K562 (cell line): ENCODE measurements at regions of chrX and their contacts with region 1.

Region 1: GRCh38 chrX:151680805-151681204 is 14.5 kb upstream of the PRRG3 start:
- DNase-seq: peak; percentile 62 to 78 (median 72)
- ATAC-seq: peak; percentile 99
- H3K4me3 ChIP-seq: no peak overlapping the region
- H3K27ac ChIP-seq: no peak overlapping the region
- H3K4me1 ChIP-seq: peaks cover 0 to 5% of the 10 kb centered on the region in 2 experiments; a peak in 3 of 5 replicates
- H3K27me3 ChIP-seq: peaks cover 0 to 12% of the 10 kb centered on the region in 2 experiments; a peak in 2 of 5 replicates
- CTCF ChIP-seq: peak; percentile 65 to 82 (median 81)
- EP300 ChIP-seq: no peak
- POLR2A ChIP-seq: no peak
- RAD21 ChIP-seq: peak; percentile 87 to 90

Region 2: GRCh38 chrX:151346931-151347543 is 333.8 kb before region 1 on chrX:
- CTCF ChIA-PET with region 1: no interaction called
- POLR2A ChIA-PET with region 1: no interaction called
- in situ Hi-C with region 1: loop called (anchors 10 kb)
- intact Hi-C with region 1: no loop called
- DNase-seq: no peak
- ATAC-seq: no peak
- H3K4me3 ChIP-seq: no peak overlapping the region
- H3K27ac ChIP-seq: no peak overlapping the region
- H3K4me1 ChIP-seq: no peaks in the 10 kb centered on the region
- H3K27me3 ChIP-seq: peaks cover 0 to 13% of the 10 kb centered on the region in 2 experiments; a peak in 2 of 5 replicates
- CTCF ChIP-seq: no peak
- EP300 ChIP-seq: no peak
- POLR2A ChIP-seq: no peak
- RAD21 ChIP-seq: no peak

Region 3: DNA sequence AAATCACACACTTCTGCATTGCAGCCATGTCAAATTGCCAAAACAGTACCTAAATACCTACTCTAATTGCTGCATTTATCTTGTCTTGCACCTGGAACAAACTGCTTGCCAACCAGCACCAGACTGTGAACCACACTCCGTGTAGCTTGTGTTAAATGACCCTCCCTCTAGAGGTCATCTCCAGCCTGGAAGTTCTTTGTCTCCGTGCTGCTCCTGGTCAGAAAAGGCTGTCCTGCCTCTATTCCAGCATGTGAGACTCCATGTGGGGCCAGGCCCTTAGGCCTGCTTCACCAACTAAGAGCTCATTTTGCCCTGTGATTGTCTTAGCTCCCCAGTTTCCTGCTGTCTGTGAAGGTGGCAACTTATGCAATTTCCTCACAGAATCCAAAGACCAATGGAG is 82.0 kb after region 1 on chrX:
- CTCF ChIA-PET with region 1: no interaction called
- POLR2A ChIA-PET with region 1: no interaction called
- in situ Hi-C with region 1: no loop called
- intact Hi-C with region 1: no loop called
- DNase-seq: peak in 1 of 4 experiments; percentile 9
- ATAC-seq: no peak
- H3K4me3 ChIP-seq: no peak overlapping the region
- H3K27ac ChIP-seq: no peak overlapping the region
- H3K4me1 ChIP-seq: no peaks in the 10 kb centered on the region
- H3K27me3 ChIP-seq: peaks cover 0 to 10% of the 10 kb centered on the region in 2 experiments; a peak in 2 of 5 replicates
- CTCF ChIP-seq: no peak
- EP300 ChIP-seq: no peak
- POLR2A ChIP-seq: no peak
- RAD21 ChIP-seq: peak in 1 of 2 experiments; percentile 23; a peak in 1 of 4 replicates

Region 4: DNA sequence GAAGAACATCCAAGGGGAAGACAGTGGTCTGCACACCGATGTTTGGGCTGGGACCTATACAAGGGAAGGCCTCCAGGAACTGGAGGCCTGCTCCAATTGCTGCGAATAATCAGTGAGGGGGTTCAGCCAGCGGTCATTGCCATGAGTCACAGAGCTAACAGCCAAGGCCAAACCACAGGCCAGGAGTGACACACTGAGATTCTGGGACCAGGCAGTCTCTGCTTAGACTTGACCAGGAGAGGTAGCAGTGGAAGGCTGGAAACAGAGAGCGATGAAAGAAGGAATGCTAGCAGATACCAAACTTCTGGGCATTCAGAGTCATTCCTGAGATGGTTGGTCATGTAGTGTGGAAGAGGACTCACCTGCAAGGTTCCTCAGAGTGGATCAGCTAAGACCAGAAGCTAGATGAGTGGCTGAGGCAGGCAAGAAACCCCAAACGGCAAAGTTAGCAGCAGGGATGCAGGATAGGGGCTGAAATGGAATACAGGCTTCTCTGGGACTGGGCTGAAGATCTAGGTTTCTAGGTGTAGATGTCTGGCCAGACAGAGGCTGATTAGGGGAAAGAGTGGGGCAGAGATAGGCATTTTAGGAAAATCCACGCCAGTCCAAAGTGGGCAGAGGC is 108.5 kb after region 1 on chrX:
- CTCF ChIA-PET with region 1: no interaction called
- POLR2A ChIA-PET with region 1: no interaction called
- in situ Hi-C with region 1: no loop called
- intact Hi-C with region 1: no loop called
- DNase-seq: peak in 1 of 4 experiments; percentile 13
- ATAC-seq: 0 out of 3 replicates have a peak, but pooled peaks have one; percentile 34
- H3K4me3 ChIP-seq: no peak overlapping the region
- H3K27ac ChIP-seq: no peak overlapping the region
- H3K4me1 ChIP-seq: no peaks in the 10 kb centered on the region
- H3K27me3 ChIP-seq: peaks cover 0 to 11% of the 10 kb centered on the region in 2 experiments; a peak in 1 of 5 replicates
- CTCF ChIP-seq: no peak
- EP300 ChIP-seq: no peak
- POLR2A ChIP-seq: no peak
- RAD21 ChIP-seq: no peak